Prostate gland (tissue), 2 donors: ENCODE measurements at regions of chr9 and their contacts with region 1.

Region 1: DNA sequence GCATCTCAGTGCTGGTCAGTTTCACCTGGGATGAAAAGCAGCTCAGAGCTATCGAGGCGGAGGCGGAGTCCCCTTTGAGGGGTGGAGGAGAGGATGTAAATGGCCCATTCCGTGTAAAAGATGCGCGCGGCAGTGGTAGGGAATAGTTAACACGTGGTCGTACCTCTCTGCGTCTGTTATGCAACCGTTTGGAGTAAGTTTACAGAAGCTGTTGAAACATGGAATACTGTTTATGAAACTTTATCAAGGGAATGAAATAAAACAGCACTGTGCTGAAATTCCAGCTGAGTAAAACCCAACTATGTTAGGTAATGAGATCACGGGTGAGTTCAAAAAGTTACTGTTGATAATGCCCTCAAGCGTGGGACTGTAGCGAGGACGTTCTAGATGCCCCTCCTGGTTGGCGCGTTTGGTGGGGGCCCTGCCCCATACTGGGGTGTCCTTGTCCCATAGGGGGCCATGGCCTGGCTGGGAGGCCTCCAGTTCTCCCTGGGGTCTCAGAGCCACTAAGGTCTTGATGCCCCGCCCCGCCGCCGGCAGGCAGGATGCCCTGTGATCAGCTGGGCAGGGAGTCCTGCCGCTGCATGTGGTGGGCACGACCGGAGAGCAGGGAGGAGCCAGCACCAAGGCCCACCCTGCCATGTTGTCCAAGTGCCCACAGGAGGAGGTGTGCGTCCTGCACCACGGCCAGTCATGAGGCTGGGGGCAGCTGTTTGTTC is 90.9 kb downstream of the COL5A1 start:
- DNase-seq: no peak
- H3K4me3 ChIP-seq: no peak overlapping the region
- H3K27ac ChIP-seq: peak overlapping the region in 1 of 2 donors; percentile 30
- H3K4me1 ChIP-seq: no peaks in the 10 kb centered on the region
- H3K27me3 ChIP-seq: no peaks in the 10 kb centered on the region
- CTCF ChIP-seq: no peak
- POLR2A ChIP-seq: no peak

Region 2: GRCh38 chr9:134707031-134707680 is 25.4 kb before region 1 on chr9:
- intact Hi-C with region 1: loop called (anchors 2 kb)
- DNase-seq: peak; percentile 47
- H3K4me3 ChIP-seq: no peak overlapping the region
- H3K27ac ChIP-seq: peak overlapping the region; percentile 60 to 67
- H3K4me1 ChIP-seq: peaks cover 12% of the 10 kb centered on the region
- H3K27me3 ChIP-seq: peaks cover 4% of the 10 kb centered on the region
- CTCF ChIP-seq: no peak
- POLR2A ChIP-seq: no peak

Region 3: GRCh38 chr9:134778841-134779411 is 46.4 kb after region 1 on chr9:
- intact Hi-C with region 1: no loop called
- DNase-seq: peak; percentile 44
- H3K4me3 ChIP-seq: no peak overlapping the region
- H3K27ac ChIP-seq: no peak overlapping the region
- H3K4me1 ChIP-seq: no peaks in the 10 kb centered on the region
- H3K27me3 ChIP-seq: no peaks in the 10 kb centered on the region
- CTCF ChIP-seq: peak; percentile 17 to 72 (median 65)
- POLR2A ChIP-seq: no peak